Activated naive CD8-positive, alpha-beta T cell treated with anti-CD3 and anti-CD28 coated beads, Interleukin-2, amount 10 ng/mL, durations not matched to agents 7 days and 5 days (primary cell): ENCODE measurements at regions of chr22 and their contacts with region 1.

Region 1: DNA sequence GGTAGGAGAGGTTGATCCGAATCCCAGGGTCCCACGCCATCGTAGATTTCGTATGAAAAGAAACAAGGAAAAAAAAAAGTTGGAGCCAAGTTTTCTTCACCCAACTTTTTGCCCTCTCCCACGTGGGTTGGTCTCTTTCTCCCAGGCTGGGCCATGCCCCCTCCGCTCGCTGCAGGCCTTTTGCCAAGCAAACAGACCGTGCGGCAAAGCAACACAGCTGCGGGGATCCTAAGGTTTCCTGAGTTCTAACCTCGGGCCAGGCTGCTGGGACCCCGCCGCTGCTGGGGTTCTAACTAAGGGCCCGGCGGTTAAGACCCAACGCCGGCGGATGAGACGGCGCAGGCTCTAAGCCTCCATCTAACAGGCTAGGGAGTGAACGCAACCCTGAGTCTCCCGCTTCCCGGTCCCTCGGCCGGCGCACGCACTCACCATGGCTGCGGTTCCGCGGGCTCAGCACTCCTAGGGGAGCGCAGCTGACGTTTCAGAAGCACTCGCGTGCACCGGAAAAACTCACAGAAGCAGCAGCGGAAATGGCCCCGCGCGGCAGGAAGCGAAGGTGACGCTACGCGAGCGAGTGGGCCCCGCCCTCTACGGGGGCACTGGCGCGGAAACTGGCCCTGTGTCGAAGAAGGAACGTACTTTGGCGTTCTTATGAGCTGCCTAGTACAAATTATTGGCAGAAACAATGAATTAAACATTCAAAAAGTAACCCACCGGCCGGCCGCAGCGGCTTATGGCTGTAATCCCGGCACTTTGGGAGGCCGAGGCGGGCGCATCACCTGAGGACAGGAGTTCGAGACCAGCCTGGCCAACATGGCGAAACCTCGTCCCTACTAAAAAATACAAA is at the start of gene SNU13:
- DNase-seq: peak; percentile 91
- ATAC-seq: peak; percentile 90
- H3K4me3 Mint-ChIP-seq: peak within 1 kb of the TSS; percentile 95
- H3K27ac Mint-ChIP-seq: peak within 1 kb of the TSS; percentile 99
- H3K4me1 Mint-ChIP-seq: peaks cover 22% of the 10 kb centered on the region
- H3K27me3 Mint-ChIP-seq: no peaks in the 10 kb centered on the region
- total RNA-seq, gene SNU13: 150 to 153 TPM

Region 2: DNA sequence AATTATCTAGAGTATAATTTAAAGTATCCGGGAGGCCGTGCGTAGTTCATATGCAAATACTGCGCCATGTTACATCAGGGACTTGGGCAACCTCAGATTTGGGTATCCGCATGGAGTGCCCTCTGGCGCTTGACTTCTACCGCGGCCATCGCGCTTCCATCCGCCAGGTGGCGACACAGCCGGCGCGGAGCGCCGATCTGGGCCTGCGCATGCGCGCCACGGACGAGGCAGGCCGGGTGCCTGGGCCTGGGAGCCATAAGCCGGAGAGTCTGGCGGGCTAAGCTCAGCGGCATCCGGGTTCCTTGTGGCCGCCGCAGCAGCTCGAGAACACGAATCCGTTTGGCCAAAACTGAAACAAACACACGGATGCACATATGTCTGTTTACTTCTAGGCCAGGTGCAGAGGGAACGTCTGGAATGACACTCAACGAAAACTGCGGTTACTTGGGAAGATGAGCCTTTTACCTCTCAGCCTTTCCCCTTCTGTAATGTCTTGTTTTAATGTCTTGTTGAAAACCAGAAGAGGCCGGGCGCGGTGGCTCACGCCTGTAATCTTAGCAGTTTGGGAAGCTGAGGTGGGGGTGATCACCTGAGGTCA is 21.8 kb before region 1 on chr22:
- POLR2A ChIA-PET with region 1: interaction called, 18 read pairs
- DNase-seq: peak; percentile 97
- ATAC-seq: peak; percentile 98
- H3K4me3 Mint-ChIP-seq: peak overlapping the region; percentile 84
- H3K27ac Mint-ChIP-seq: peak overlapping the region; percentile 98
- H3K4me1 Mint-ChIP-seq: peaks cover 8% of the 10 kb centered on the region
- H3K27me3 Mint-ChIP-seq: no peaks in the 10 kb centered on the region